ENCODE measurements at regions of chr4 and their contacts with region 1.

Region 1: GRCh38 chr4:114649908-114650307 is 51.3 kb downstream of the UGT8 start:
- DNase-seq: no peak
- ATAC-seq: no peak

Region 2: DNA sequence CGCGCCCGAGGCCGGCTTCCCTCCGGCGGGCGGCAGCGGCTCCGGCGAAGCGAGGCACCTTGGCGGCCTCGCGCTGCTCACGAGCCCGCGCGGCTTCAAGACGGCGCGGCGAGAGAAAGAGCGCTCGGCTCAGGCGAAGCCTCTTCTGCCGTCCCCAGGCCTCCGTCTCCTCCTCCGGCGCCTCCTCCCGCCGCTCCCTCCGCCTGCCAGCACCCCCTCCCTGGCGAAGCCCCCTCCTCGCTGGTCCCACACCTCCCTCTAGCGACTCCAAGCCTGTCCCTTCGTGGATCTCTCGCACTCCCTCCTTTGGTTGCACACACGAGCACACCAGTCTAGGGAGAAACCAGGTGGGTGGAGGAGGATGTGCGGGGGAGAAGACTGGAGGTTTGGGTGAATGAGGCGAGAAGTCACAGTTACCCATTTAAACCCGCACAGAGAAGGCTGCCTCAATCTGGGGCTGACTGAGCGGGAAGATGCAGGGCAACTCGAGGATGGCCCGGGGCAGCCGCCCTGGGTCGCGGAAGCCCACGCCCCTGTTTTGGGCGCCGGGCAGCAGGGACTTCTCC is 888.2 kb before region 1 on chr4 and contains the start of gene CAMK2D:
- intact Hi-C with region 1: no loop called
- DNase-seq: peak; percentile 82
- ATAC-seq: peak; percentile 75 to 83
- total RNA-seq, gene CAMK2D: 133 to 136 TPM

Region 3: GRCh38 chr4:114593526-114593925 is 56.4 kb before region 1 on chr4:
- intact Hi-C with region 1: loop called in 1 of 2 experiments (anchors 2 kb)
- DNase-seq: no peak
- ATAC-seq: no peak

Region 4: DNA sequence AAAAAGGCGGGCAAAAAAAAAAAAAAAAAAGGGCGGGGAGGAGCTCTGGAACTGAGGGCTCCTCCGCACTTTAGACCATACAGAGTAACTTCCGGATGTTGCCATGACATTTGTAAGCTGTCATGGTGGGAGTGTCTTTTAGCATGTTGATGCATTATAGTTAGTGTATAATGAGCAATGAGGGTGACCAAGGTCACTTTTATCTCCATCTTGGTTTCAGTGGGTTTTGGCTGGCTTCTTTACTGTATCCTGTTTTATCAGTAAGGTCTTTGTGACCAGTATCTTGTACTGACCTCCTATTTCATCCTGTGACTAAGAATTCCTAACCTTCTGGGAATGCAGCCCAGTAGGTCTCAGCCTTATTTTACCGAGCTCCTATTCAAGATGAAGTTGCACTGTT is 142.1 kb after region 1 on chr4:
- intact Hi-C with region 1: no loop called
- DNase-seq: no peak
- ATAC-seq: no peak

Measured in left cardiac atrium (tissue), 4 donors.